ENCODE measurements at regions of chr5 and their contacts with region 1.

Region 1: GRCh38 chr5:43711176-43711895 is 108.4 kb downstream of the NNT start:
- DNase-seq: no peak
- ATAC-seq: no peak
- H3K4me3 ChIP-seq: no peak overlapping the region
- H3K27ac ChIP-seq: no peak overlapping the region
- H3K4me1 ChIP-seq: no peaks in the 10 kb centered on the region
- H3K27me3 ChIP-seq: no peaks in the 10 kb centered on the region
- CTCF ChIP-seq: no peak

Region 2: GRCh38 chr5:43694027-43694426 is 17.3 kb before region 1 on chr5:
- CTCF ChIA-PET with region 1: no interaction called
- POLR2A ChIA-PET with region 1: no interaction called
- in situ Hi-C with region 1: no loop called
- intact Hi-C with region 1: loop called (anchors 2 kb)
- DNase-seq: no peak
- ATAC-seq: no peak
- H3K4me3 ChIP-seq: no peak overlapping the region
- H3K27ac ChIP-seq: no peak overlapping the region
- H3K4me1 ChIP-seq: no peaks in the 10 kb centered on the region
- H3K27me3 ChIP-seq: no peaks in the 10 kb centered on the region
- CTCF ChIP-seq: no peak